IMR-90 (cell line): ENCODE measurements at regions of chr17 and their contacts with region 1.

Region 1: GRCh38 chr17:28018439-28019070 is 23.9 kb upstream of the NLK start:
- DNase-seq: peak; percentile 33
- ATAC-seq: no peak
- H3K4me3 ChIP-seq: no peak overlapping the region
- H3K27ac ChIP-seq: no peak overlapping the region
- H3K4me1 ChIP-seq: no peaks in the 10 kb centered on the region
- H3K27me3 ChIP-seq: peaks cover 2% of the 10 kb centered on the region; the same call in 1 of the 2 replicates
- CTCF ChIP-seq: no peak
- POLR2A ChIP-seq: no peak
- RAD21 ChIP-seq: no peak

Region 2: GRCh38 chr17:27915709-27916108 is 102.8 kb before region 1 on chr17:
- CTCF ChIA-PET with region 1: no interaction called
- POLR2A ChIA-PET with region 1: no interaction called
- dilution Hi-C with region 1: no loop called
- in situ Hi-C with region 1: no loop called
- intact Hi-C with region 1: loop called (anchors 10 kb)
- DNase-seq: no peak
- ATAC-seq: no peak
- H3K4me3 ChIP-seq: no peak overlapping the region
- H3K27ac ChIP-seq: no peak overlapping the region
- H3K4me1 ChIP-seq: no peaks in the 10 kb centered on the region
- H3K27me3 ChIP-seq: peaks cover 10% of the 10 kb centered on the region
- CTCF ChIP-seq: no peak
- POLR2A ChIP-seq: no peak
- RAD21 ChIP-seq: no peak